Mucosa of descending colon (tissue), 3 donors: ENCODE measurements at regions of chr7 and their contacts with region 1.

Region 1: GRCh38 chr7:27576360-27576944 is 86.2 kb downstream of the HIBADH start:
- DNase-seq: peak in 1 of 3 donors; percentile 34
- ATAC-seq: peak; percentile 63
- H3K4me3 ChIP-seq: no peak overlapping the region
- H3K4me1 ChIP-seq: no peaks in the 10 kb centered on the region
- CTCF ChIP-seq: peak; percentile 33

Region 2: DNA sequence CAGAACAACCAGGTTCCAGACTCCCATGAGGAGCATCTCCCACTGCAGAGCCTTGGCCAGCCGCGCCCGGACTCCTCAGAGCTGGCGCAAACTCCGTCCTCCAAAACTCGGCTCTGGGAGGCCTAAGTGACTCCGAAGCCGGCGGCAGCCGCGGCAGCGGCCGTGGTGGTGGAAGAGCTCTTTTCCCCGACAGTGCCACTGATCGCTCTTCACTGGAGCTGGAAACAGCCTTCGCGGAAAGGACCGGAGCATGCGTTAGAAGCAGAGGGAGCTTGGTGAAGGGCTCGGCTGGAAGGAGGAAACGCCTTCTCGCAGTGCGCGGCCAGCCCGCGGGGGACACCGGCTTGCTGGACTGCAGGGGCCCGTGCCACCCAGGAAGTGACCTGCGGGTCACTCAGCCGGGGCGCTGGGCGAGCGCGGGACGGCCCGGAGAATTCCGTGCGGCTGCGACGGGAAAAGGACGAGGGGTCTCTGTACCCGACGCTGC is 371.6 kb before region 1 on chr7:
- intact Hi-C with region 1: loop called in 1 of 2 experiments (anchors 5 kb)
- DNase-seq: peak in 2 of 3 donors; percentile 49 to 73
- ATAC-seq: peak; percentile 11
- H3K4me3 ChIP-seq: no peak overlapping the region
- H3K4me1 ChIP-seq: peaks cover 14% of the 10 kb centered on the region
- CTCF ChIP-seq: no peak

Region 3: DNA sequence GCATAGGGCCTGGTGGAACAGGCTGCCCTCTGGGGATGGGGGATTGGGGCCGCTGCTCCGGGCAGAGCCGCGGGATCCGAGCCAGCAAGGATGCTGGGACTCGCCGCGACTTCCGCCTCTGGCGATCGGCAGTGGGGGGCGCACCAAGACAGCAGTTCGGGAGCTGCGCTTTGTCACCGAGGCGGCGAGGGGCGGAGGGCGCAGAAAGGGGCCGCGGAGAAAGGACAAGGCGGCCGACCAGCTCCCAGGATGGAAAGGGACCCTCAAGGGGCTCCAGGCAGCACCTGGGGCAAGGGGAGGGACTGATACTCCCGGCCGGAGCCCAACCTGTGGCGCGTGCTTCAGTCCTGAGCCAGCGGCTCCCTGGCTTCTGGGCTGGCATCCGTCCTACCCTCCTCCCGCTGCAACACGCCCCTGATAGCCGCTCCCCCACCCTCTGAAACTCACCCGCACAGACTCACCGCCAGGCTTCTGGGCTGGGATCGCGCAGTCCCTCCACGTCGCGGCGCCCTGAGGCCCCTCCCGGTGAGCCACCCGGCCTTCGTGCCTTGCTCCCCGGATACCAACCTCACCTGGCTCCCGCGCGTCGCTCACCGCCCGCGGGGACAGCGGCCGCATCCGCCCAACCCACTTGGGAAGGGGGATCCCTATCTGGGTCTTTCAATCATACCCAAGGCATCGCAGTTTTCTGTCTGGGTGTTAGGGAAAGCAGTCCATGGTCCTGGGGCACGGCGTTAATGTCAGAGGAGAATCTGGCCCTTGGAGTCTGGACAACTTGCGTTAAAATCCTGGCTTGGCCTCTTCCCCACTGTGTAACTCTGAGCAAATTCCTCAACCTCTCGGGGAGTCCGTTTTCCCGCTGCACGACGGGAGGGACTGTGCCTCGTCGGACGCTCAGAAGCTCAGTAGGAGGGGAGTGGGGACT is 340.8 kb before region 1 on chr7:
- intact Hi-C with region 1: loop called in 1 of 2 experiments (anchors 10 kb)
- DNase-seq: peak; percentile 73 to 84 (median 79)
- ATAC-seq: peak; percentile 88
- H3K4me3 ChIP-seq: no peak overlapping the region
- H3K4me1 ChIP-seq: peaks cover 14% of the 10 kb centered on the region
- CTCF ChIP-seq: peak; percentile 25

Region 4: GRCh38 chr7:27921081-27921836 is 344.8 kb after region 1 on chr7:
- intact Hi-C with region 1: loop called in 1 of 2 experiments (anchors 5 kb)
- DNase-seq: peak in 1 of 3 donors; percentile 85
- ATAC-seq: peak; percentile 88
- H3K4me3 ChIP-seq: no peak overlapping the region
- H3K4me1 ChIP-seq: peaks cover 7% of the 10 kb centered on the region
- CTCF ChIP-seq: peak; percentile 15